Mammary epithelial cell (primary cell): ENCODE measurements at regions of chr1 and their contacts with region 1.

Region 1: DNA sequence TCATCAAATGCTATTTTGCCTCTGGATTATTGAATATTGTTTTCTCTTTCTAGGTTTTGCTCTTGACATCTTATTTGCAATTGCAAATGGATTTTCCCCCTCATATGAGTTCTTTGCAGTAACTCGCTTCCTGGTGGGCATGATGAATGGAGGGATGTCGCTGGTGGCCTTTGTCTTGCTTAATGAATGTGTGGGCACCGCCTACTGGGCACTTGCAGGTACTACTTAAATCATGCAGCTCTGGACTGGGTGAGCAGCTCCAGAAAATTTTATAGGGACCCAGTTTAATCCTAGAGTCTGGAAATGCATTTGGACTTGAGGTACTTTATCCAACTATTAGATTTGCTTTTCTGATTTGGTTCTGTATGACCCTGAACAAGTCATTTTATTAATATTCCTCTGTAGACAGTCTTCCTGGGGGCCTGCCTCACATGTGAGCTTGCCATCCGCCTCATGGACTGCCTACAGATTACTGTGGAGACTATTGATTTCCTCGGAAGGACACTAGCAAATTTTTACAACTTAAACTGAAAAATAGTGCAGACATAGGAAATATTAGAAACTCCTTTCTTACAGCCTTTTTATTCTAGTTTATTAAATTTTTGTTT is 44.5 kb downstream of the SLC22A15 start:
- DNase-seq: peak; percentile 39
- H3K4me3 ChIP-seq: no peak overlapping the region
- H3K27ac ChIP-seq: no peak overlapping the region
- H3K4me1 ChIP-seq: no peaks in the 10 kb centered on the region
- H3K27me3 ChIP-seq: no peaks in the 10 kb centered on the region
- CTCF ChIP-seq: peak; percentile 71 to 72

Region 2: GRCh38 chr1:115813727-115814126 is 207.0 kb before region 1 on chr1:
- CTCF ChIA-PET with region 1: no interaction called
- dilution Hi-C with region 1: no loop called
- in situ Hi-C with region 1: no loop called
- intact Hi-C with region 1: loop called (anchors 2 kb)
- DNase-seq: no peak
- H3K4me3 ChIP-seq: no peak overlapping the region
- H3K27ac ChIP-seq: no peak overlapping the region
- H3K4me1 ChIP-seq: peaks cover 24% of the 10 kb centered on the region
- H3K27me3 ChIP-seq: no peaks in the 10 kb centered on the region
- CTCF ChIP-seq: no peak

Region 3: DNA sequence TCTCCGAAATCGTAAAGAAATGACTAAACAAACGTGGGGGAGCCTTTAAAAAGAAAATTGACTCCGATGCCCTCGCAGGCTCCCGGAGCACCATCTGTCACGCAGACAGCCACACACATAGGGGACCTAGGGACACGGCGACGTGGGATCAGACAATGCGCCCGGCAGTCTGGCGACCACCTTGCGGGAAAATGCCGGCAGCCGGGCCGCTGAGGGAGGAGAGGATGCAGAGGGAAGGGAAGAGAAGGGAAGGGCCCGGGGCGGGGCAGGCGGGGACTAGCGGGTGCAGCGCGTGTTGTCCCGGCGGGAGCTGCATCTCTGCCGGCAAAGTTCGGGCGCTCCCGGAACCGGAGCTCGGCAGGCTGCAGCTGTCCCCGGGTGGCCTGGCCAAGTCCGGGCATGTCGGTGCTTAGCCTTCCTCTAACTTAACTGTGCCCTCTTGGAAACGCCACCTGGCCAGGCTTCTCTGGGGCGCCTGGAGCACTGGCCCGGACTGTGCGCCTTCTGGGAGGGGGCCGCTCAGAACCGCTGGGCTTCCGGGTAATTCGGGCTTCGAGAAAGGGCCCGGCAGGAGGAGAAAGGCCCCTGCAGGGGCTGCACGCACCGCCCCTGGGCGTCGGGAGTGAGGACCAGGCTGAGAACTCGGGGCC is 181.6 kb before region 1 on chr1:
- CTCF ChIA-PET with region 1: interaction called, 11 read pairs
- dilution Hi-C with region 1: no loop called
- in situ Hi-C with region 1: no loop called
- intact Hi-C with region 1: no loop called
- DNase-seq: peak; percentile 60
- H3K4me3 ChIP-seq: peak overlapping the region; percentile 50 to 63 (median 55)
- H3K27ac ChIP-seq: peak overlapping the region; percentile 56
- H3K4me1 ChIP-seq: peaks cover 15% of the 10 kb centered on the region
- H3K27me3 ChIP-seq: no peaks in the 10 kb centered on the region
- CTCF ChIP-seq: no peak

Region 4: DNA sequence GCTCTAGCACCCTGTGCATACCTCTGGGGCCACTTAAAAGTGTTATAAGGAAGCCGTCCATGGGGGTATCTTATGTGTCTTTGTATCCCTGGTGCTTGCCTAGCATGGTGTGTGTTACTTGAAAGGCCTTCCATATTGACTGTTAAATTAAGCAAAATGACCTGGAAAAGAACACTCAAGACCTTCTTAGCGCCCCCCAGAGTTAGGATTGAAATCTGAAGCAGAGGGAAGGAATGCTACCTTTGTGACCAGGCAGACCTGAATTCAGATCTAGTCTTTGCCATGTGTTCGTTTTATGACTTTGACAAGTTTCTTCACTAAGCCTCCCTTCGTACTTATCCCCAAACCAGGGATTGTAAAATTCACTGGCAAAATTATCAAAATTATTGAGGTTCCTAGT is 15.5 kb after region 1 on chr1:
- CTCF ChIA-PET with region 1: no interaction called
- dilution Hi-C with region 1: no loop called
- in situ Hi-C with region 1: no loop called
- intact Hi-C with region 1: no loop called
- DNase-seq: no peak
- H3K4me3 ChIP-seq: no peak overlapping the region
- H3K27ac ChIP-seq: no peak overlapping the region
- H3K4me1 ChIP-seq: peaks cover 13% of the 10 kb centered on the region
- H3K27me3 ChIP-seq: no peaks in the 10 kb centered on the region
- CTCF ChIP-seq: peak in 1 of 2 donors; percentile 2

Region 5: GRCh38 chr1:116062201-116062600 is 41.4 kb after region 1 on chr1:
- CTCF ChIA-PET with region 1: no interaction called
- dilution Hi-C with region 1: no loop called
- in situ Hi-C with region 1: no loop called
- intact Hi-C with region 1: no loop called
- DNase-seq: no peak
- H3K4me3 ChIP-seq: no peak overlapping the region
- H3K27ac ChIP-seq: no peak overlapping the region
- H3K4me1 ChIP-seq: peaks cover 5% of the 10 kb centered on the region
- H3K27me3 ChIP-seq: no peaks in the 10 kb centered on the region
- CTCF ChIP-seq: no peak